ENCODE measurements at regions of chr1 and their contacts with region 1.

Region 1: DNA sequence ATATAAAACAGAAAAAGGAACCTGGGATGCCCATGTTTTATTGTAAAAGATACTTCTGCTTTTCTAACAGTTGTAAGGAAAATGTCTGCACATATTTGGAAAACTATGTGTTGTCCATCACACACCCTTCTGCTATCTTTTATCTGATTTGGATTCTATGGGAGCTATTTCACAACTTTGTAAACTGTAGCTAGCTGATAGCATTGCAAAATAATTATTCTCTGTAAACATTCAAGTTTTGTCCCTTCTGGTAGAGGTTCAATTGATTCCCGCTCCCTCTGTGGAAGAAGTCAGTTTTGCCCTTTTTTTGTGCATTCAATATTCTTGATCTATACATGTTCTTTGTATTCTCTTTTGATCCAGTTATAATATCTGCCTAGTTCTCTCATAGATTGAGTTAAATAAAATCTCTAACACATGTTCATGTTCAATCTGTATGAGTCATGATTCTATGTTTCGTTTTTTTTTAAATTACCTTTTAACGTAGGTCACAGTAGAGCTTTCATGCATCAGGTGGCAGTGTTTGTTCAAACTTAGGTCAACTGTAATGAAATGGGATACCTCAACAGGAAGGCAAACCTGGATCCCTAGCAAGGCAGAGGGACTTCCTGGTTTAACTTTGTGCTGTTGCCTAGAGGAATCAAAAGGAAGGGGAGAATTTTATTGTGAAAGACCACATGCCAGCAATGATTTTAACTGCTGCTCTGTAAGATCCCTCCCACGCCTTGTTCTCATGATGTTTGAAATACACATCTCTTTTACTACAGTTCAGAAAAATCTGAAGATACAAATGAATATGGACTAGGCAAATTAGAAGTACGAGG is 26.0 kb upstream of the BCL9 start:
- DNase-seq: no peak

Region 2: GRCh38 chr1:147478556-147478955 is 36.7 kb before region 1 on chr1:
- intact Hi-C with region 1: no loop called
- DNase-seq: no peak

Region 3: DNA sequence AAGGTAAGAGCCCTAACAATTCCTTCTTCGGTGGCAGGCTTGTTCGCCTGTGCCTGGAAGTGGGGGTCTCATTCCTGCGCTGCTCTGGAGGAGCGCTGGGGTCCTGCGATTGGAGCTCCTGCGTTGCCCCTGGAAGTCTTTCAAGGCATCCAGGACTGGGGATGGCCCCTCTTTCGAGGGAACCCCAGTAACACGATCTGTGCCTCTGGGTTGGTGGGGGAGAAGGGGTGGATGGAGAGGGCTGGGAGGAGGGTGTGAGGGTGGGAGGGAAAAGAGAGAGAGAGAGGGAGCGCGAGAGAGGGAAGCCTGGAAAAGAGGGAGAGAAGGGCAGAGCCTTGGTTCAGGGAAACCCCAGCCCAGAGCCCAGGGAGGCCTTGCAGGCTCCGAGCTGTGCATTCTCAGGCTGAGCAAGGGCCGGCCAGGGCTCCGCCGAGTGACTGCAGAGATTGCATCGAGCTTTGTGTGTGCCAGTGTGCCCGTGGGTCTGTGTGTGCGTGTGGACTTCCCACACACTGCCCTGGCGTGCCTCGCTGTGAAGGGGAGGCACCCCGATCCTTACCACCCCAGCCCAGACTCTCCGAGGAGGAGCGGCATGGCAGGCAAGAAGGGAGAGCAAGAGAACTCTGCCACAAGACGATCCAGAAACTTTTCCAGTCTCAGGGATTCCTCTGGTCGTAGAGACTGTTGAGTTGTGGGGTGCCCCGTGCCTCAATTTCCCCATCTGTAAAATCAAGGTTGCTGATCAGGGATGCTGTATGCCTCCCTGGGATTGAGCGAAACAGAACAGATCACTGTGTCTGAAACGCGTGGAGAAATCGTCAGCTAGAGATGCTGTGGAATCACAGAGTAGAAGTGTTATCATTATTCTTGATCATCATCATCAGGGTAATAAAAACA is 26.7 kb after region 1 on chr1:
- intact Hi-C with region 1: loop called (anchors 2 kb)
- DNase-seq: no peak